ENCODE measurements at regions of chr1 and their contacts with region 1.

Region 1: GRCh38 chr1:180954005-180954800 is 41.5 kb downstream of the KIAA1614 start:
- DNase-seq: peak; percentile 83
- CTCF ChIP-seq: no peak

Region 2: GRCh38 chr1:180939073-180939710 is 15.0 kb before region 1 on chr1:
- CTCF ChIA-PET with region 1: interaction called, 13 read pairs
- POLR2A ChIA-PET with region 1: no interaction called
- DNase-seq: no peak
- CTCF ChIP-seq: no peak

Region 3: DNA sequence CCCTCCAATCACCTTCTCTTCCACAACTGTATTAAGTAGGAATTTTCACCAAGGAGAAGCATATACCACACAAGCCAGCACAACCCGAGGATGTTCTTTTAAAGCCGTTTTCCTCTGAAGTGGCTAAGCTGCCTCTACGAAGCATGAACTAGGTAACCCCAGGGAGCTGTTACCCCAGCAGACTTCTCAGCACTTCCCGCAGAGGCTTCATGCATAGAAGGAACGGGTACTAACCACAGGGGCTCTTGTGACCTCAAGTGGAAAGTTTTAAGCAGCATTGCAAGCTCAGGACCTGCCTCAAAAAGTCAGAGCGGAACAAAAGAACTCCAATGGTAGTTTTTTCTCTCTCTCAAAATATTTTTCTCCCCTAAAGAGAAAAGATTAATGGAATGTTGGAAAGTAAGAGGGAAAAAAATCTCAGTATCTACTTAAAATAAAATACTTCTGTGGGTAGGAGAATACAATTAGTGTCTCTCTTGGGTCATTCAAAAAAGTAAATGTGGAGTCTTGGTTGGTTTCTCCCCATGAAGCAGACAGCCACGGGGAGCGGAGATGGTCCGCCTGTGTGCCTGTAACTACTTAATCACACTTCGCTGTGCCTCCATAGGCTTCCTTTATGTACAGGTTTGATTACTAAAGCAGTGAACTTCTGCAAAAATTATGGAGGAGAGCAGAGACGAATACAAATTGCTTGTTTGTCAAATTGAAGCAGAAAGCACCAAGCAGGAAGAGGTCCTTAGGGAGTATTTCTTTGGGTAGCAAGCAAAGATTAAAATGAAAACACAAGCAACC is 27.6 kb after region 1 on chr1:
- CTCF ChIA-PET with region 1: no interaction called
- POLR2A ChIA-PET with region 1: no interaction called
- DNase-seq: peak; percentile 76
- CTCF ChIP-seq: no peak

Region 4: GRCh38 chr1:181112071-181112929 is 158.1 kb after region 1 on chr1:
- CTCF ChIA-PET with region 1: no interaction called
- POLR2A ChIA-PET with region 1: no interaction called
- DNase-seq: no peak
- CTCF ChIP-seq: no peak